Activated T-helper 1 cell treated with anti-CD3 and anti-CD28 coated beads, Interleukin-12 subunit alpha, Interleukin-12 subunit beta, Interleukin-2, Interleukin-4 antibody, amounts not matched to agents 30 ng/mL and 10 ng/mL and 1 ng/mL, durations not matched to agents 14 hours and 24 hours and 36 hours (primary cell): ENCODE measurements at regions of chr12 and their contacts with region 1.

Region 1: GRCh38 chr12:121351820-121352681 is at the start of gene ANAPC5:
- DNase-seq: peak; percentile 90
- H3K4me3 Mint-ChIP-seq: peak within 1 kb of the TSS; percentile 95
- H3K27ac Mint-ChIP-seq: peak within 1 kb of the TSS; percentile 98
- H3K4me1 Mint-ChIP-seq: peaks cover 33% of the 10 kb centered on the region
- H3K27me3 Mint-ChIP-seq: peaks cover 10% of the 10 kb centered on the region
- total RNA-seq, gene ANAPC5: 139 and 144 TPM in 2 replicates

Region 2: GRCh38 chr12:121296618-121297434 is 55.2 kb before region 1 on chr12 and contains the start of gene CAMKK2:
- intact Hi-C with region 1: loop called (anchors 1 kb)
- DNase-seq: peak; percentile 91
- H3K4me3 Mint-ChIP-seq: peak within 1 kb of the TSS; percentile 94
- H3K27ac Mint-ChIP-seq: peak within 1 kb of the TSS; percentile 88
- H3K4me1 Mint-ChIP-seq: peaks cover 35% of the 10 kb centered on the region
- H3K27me3 Mint-ChIP-seq: no peaks in the 10 kb centered on the region
- total RNA-seq, gene CAMKK2: 38.1 and 41.0 TPM in 2 replicates

Region 3: DNA sequence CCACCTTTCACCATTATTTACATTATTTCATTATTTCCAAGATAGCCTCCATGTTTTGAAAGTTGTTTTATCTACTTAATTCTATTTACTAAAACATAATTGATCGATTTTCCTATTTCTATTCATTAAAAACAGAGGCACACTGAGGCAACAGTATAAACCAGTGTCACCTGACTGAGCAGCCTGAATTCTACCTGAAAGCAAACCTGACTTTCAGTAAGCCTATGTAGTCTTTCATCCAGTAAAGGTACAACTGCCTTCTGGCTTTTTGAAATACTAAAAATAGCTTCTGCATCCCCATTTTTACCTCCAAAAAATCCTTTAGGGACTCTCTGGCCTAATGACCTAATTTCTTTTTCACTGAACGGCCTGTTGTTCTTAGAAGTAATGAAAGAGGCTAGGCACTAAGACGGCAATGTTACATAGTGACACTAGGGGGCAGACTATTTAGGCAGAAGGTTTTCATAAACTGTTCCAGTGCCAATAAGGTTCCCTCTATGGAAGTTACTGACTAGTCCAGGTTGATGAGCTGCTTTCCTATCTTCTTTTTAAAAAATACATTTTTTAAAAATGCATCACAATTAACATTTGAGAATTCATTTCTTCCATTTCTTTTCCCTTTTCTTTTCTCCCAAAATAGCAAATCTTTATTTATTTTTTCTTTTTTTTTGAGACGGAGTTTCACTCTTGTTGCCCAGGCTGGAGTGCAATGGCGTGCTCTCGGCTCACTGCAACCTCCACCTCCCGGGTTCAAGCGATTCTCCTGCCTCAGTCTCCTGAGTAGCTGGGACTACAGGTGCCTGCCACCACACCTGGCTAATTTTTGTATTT is 17.3 kb before region 1 on chr12:
- intact Hi-C with region 1: loop called (anchors 2 kb)
- DNase-seq: no peak
- H3K4me3 Mint-ChIP-seq: no peak overlapping the region
- H3K27ac Mint-ChIP-seq: no peak overlapping the region
- H3K4me1 Mint-ChIP-seq: peaks cover 4% of the 10 kb centered on the region
- H3K27me3 Mint-ChIP-seq: no peaks in the 10 kb centered on the region

Region 4: DNA sequence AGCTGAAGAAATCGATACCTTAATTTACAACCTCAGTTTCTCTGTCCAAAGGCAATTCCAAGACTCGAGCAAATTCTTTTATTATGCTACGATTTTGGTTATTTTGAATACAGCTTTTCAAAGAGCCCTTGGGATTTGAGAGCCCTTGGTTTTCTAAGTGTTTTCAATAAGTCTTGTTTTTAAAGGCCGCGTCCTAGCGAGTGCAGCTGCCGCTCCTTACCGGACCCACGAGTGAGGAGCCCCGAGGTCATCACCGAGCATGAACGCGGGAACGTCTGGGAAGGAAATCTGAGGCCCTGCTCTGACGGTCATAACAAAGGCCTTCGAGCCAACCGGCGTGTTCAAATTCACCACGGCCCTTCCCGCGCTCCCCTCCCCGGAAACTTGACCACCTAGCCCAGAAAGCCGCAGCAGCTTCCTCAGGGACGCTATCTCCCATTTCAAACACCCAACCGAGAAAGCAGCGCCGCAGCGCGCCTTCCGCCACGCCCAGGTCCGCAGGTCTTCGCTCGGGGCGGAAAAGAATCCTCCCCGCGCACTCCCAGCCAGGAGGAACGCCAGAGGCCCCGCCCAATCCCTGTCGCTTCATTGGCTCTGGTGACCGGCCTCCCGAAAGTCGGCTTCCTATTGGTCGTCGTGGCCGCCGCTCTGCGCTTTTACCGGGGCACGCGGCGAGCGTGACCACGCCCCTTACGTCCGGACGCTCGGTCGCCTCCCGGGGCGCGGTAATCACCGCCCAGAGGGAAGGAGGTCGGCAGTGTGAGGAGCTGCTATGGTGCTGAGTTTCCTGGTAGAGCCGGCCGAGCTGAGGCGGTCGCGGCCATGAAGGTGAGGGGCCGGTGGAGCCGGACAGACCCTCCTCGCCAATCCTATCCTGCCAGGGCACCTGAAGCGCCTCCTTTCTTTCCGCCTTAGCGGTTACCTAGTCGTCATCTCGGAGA is 47.6 kb after region 1 on chr12 and contains the start of gene RNF34:
- intact Hi-C with region 1: loop called (anchors 1 kb)
- DNase-seq: peak; percentile 98
- H3K4me3 Mint-ChIP-seq: peak within 1 kb of the TSS; percentile 92
- H3K27ac Mint-ChIP-seq: peak within 1 kb of the TSS; percentile 94
- H3K4me1 Mint-ChIP-seq: peaks cover 31% of the 10 kb centered on the region
- H3K27me3 Mint-ChIP-seq: no peaks in the 10 kb centered on the region
- total RNA-seq, gene RNF34: 80.6 and 83.7 TPM in 2 replicates

Region 5: DNA sequence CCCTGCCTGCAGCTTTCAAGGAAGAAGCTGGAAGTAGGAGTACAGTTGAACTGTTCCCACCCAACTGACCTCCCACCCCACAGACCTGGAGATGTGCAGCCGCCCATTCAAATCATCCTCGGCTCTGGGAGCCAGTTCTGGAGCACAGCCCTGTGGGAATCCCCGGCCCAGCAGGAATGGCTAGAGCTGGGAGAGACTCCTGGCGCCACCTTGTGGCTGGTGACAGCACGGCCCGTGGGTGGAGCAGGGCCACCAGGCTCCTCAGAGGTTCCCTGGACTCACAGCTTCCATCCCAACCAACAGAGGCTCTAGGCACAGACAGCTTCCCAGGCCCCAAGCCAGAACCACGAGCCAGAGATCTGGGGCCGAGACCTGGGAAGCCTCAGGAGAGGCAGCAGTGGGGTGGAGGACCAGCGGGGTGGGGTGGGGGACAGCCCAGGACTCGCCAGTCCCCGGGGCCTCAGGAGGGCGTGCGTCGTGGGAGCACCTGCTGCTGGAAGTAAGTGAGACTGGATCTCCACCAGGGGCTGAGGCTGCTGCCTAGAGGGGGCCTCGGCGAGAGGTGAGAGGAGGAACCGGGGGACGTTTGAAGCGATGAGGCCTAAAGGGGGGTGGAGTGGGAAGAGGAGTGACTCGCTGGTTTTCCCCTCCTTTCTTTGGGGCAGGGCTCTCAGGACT is 91.3 kb after region 1 on chr12:
- intact Hi-C with region 1: loop called (anchors 5 kb)
- DNase-seq: peak; percentile 53
- H3K4me3 Mint-ChIP-seq: no peak overlapping the region
- H3K27ac Mint-ChIP-seq: no peak overlapping the region
- H3K4me1 Mint-ChIP-seq: no peaks in the 10 kb centered on the region
- H3K27me3 Mint-ChIP-seq: no peaks in the 10 kb centered on the region

Region 6: GRCh38 chr12:121467115-121467793 is 115.2 kb after region 1 on chr12:
- intact Hi-C with region 1: loop called (anchors 1 kb)
- DNase-seq: peak; percentile 88
- H3K4me3 Mint-ChIP-seq: no peak overlapping the region
- H3K27ac Mint-ChIP-seq: no peak overlapping the region
- H3K4me1 Mint-ChIP-seq: peaks cover 29% of the 10 kb centered on the region
- H3K27me3 Mint-ChIP-seq: peaks cover 8% of the 10 kb centered on the region

Region 7: GRCh38 chr12:121688966-121689365 is 336.9 kb after region 1 on chr12:
- intact Hi-C with region 1: loop called (anchors 1 kb)
- DNase-seq: no peak
- H3K4me3 Mint-ChIP-seq: no peak overlapping the region
- H3K27ac Mint-ChIP-seq: no peak overlapping the region
- H3K4me1 Mint-ChIP-seq: peaks cover 10% of the 10 kb centered on the region
- H3K27me3 Mint-ChIP-seq: peaks cover 7% of the 10 kb centered on the region